Transverse colon (tissue), 4 donors: ENCODE measurements at regions of chr10 and their contacts with region 1.

Region 1: GRCh38 chr10:3757638-3758490 is 27.1 kb downstream of the KLF6 start:
- DNase-seq: no peak
- H3K4me3 ChIP-seq: no peak overlapping the region
- H3K27ac ChIP-seq: peak overlapping the region in 3 of 4 donors; percentile 27 to 65 (median 38)
- H3K4me1 ChIP-seq: peaks cover 0 to 6% (median 0%) of the 10 kb centered on the region in 4 donors
- H3K27me3 ChIP-seq: no peaks in the 10 kb centered on the region
- CTCF ChIP-seq: no peak
- EP300 ChIP-seq: no peak
- POLR2A ChIP-seq: no peak

Region 2: GRCh38 chr10:3248888-3249758 is 508.7 kb before region 1 on chr10:
- in situ Hi-C with region 1: no loop called
- intact Hi-C with region 1: loop called (anchors 10 kb)
- DNase-seq: no peak
- H3K4me3 ChIP-seq: no peak overlapping the region
- H3K27ac ChIP-seq: peak overlapping the region; percentile 62 to 81 (median 70)
- H3K4me1 ChIP-seq: peaks cover 0 to 15% (median 3%) of the 10 kb centered on the region in 4 donors
- H3K27me3 ChIP-seq: no peaks in the 10 kb centered on the region
- CTCF ChIP-seq: no peak
- EP300 ChIP-seq: no peak
- POLR2A ChIP-seq: no peak

Region 3: GRCh38 chr10:3467052-3467951 is 290.6 kb before region 1 on chr10:
- in situ Hi-C with region 1: loop called in 1 of 4 experiments (anchors 25 kb)
- intact Hi-C with region 1: no loop called
- DNase-seq: peak; percentile 73
- H3K4me3 ChIP-seq: no peak overlapping the region
- H3K27ac ChIP-seq: peak overlapping the region; percentile 81 to 91 (median 86)
- H3K4me1 ChIP-seq: peaks cover 11 to 72% (median 46%) of the 10 kb centered on the region in 4 donors
- H3K27me3 ChIP-seq: no peaks in the 10 kb centered on the region
- CTCF ChIP-seq: peak in 2 of 5 experiments; percentile 13 to 28
- EP300 ChIP-seq: no peak
- POLR2A ChIP-seq: no peak

Region 4: GRCh38 chr10:3595736-3596135 is 162.1 kb before region 1 on chr10:
- in situ Hi-C with region 1: no loop called
- intact Hi-C with region 1: loop called (anchors 10 kb)
- DNase-seq: no peak
- H3K4me3 ChIP-seq: no peak overlapping the region
- H3K27ac ChIP-seq: no peak overlapping the region
- H3K4me1 ChIP-seq: no peaks in the 10 kb centered on the region
- H3K27me3 ChIP-seq: no peaks in the 10 kb centered on the region
- CTCF ChIP-seq: no peak
- EP300 ChIP-seq: no peak
- POLR2A ChIP-seq: no peak

Region 5: GRCh38 chr10:3776796-3777571 is 19.1 kb after region 1 on chr10:
- in situ Hi-C with region 1: no loop called
- intact Hi-C with region 1: no loop called
- DNase-seq: peak; percentile 72
- H3K4me3 ChIP-seq: peak overlapping the region in 1 of 4 donors; percentile 6
- H3K27ac ChIP-seq: peak overlapping the region; percentile 99 to 100 (median 100)
- H3K4me1 ChIP-seq: peaks cover 11 to 74% (median 62%) of the 10 kb centered on the region in 4 donors
- H3K27me3 ChIP-seq: no peaks in the 10 kb centered on the region
- CTCF ChIP-seq: no peak
- EP300 ChIP-seq: peak; percentile 66
- POLR2A ChIP-seq: peak; percentile 50

Region 6: GRCh38 chr10:3791974-3792633 is 34.2 kb after region 1 on chr10:
- in situ Hi-C with region 1: no loop called
- intact Hi-C with region 1: no loop called
- DNase-seq: no peak
- H3K4me3 ChIP-seq: no peak overlapping the region
- H3K27ac ChIP-seq: no peak overlapping the region
- H3K4me1 ChIP-seq: peaks cover 0 to 7% (median 0%) of the 10 kb centered on the region in 4 donors
- H3K27me3 ChIP-seq: no peaks in the 10 kb centered on the region
- CTCF ChIP-seq: no peak
- EP300 ChIP-seq: no peak
- POLR2A ChIP-seq: no peak